IMR-90 (cell line): ENCODE measurements at regions of chr1 and their contacts with region 1.

Region 1: GRCh38 chr1:203711251-203712007 is 53.6 kb upstream of the LAX1 start:
- DNase-seq: no peak
- ATAC-seq: no peak
- H3K4me3 ChIP-seq: no peak overlapping the region
- H3K27ac ChIP-seq: no peak overlapping the region
- H3K4me1 ChIP-seq: no peaks in the 10 kb centered on the region
- H3K27me3 ChIP-seq: no peaks in the 10 kb centered on the region
- CTCF ChIP-seq: no peak
- POLR2A ChIP-seq: no peak
- RAD21 ChIP-seq: no peak

Region 2: GRCh38 chr1:203807196-203807595 is 95.8 kb after region 1 on chr1:
- CTCF ChIA-PET with region 1: no interaction called
- POLR2A ChIA-PET with region 1: interaction called, 4 read pairs
- dilution Hi-C with region 1: no loop called
- in situ Hi-C with region 1: no loop called
- intact Hi-C with region 1: loop called (anchors 10 kb)
- DNase-seq: peak; percentile 95
- ATAC-seq: peak; percentile 95
- H3K4me3 ChIP-seq: no peak overlapping the region
- H3K27ac ChIP-seq: peak overlapping the region; percentile 13; the same call in 1 of the 2 replicates
- H3K4me1 ChIP-seq: 0 out of 2 replicates have a peak, but pooled peaks cover 3% of the 10 kb centered on the region
- H3K27me3 ChIP-seq: no peaks in the 10 kb centered on the region
- CTCF ChIP-seq: 0 out of 2 replicates have a peak, but pooled peaks have one; percentile 8
- POLR2A ChIP-seq: no peak
- RAD21 ChIP-seq: peak; percentile 29